GM12878 (cell line): ENCODE measurements at regions of chr7 and their contacts with region 1.

Region 1: DNA sequence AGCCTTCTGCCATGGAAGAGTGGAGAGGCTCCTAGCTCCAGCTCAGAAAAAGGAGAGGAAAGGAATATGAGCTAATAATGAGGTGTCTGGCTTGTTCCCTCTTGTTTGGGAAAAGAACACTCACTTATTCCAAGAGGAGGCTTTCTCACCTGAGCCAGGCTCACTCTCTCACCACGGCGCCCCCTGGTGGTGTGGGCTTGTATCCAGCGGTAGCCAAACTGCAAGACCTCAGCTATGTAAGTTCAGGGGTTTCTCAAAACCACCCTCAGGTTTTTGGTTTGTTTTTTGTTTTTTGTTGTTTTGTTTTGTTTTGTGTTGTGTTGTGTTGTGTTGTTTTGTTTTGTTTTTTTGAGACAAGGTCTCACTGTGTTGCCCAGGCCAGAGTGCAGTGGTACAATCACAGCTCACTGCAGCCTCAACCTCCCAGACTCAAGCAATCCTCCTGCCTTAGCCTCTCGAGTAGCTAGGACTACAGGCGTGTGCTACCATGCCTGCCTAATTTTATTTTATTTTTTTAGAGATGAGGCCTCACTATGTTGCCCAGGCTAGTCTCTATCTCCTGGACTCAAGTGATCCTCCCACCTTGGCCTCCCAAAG is 124.0 kb downstream of the TMEM130 start:
- DNase-seq: no peak
- ATAC-seq: peak; percentile 85
- H3K4me3 ChIP-seq: no peak overlapping the region
- H3K27ac ChIP-seq: no peak overlapping the region
- H3K4me1 ChIP-seq: no peaks in the 10 kb centered on the region
- H3K27me3 ChIP-seq: no peaks in the 10 kb centered on the region
- CTCF ChIP-seq: peak; percentile 75 to 89 (median 88)
- EP300 ChIP-seq: no peak
- POLR2A ChIP-seq: no peak
- RAD21 ChIP-seq: peak; percentile 75

Region 2: GRCh38 chr7:98420966-98421612 is 324.7 kb before region 1 on chr7:
- CTCF ChIA-PET with region 1: interaction called, 23 read pairs
- POLR2A ChIA-PET with region 1: no interaction called
- RAD21 ChIA-PET with region 1: interaction called, 6 read pairs
- SMC1A ChIA-PET with region 1: interaction called, 3 read pairs
- in situ Hi-C with region 1: no loop called
- intact Hi-C with region 1: no loop called
- DNase-seq: no peak
- ATAC-seq: peak; percentile 98
- H3K4me3 ChIP-seq: no peak overlapping the region
- H3K27ac ChIP-seq: no peak overlapping the region
- H3K4me1 ChIP-seq: peaks cover 6% of the 10 kb centered on the region; the same call in 1 of the 2 replicates
- H3K27me3 ChIP-seq: 0 out of 4 replicates have a peak, but pooled peaks cover 0 to 3% of the 10 kb centered on the region in 2 experiments
- CTCF ChIP-seq: peak; percentile 84 to 95 (median 93)
- EP300 ChIP-seq: no peak
- POLR2A ChIP-seq: no peak
- RAD21 ChIP-seq: peak; percentile 59

Region 3: DNA sequence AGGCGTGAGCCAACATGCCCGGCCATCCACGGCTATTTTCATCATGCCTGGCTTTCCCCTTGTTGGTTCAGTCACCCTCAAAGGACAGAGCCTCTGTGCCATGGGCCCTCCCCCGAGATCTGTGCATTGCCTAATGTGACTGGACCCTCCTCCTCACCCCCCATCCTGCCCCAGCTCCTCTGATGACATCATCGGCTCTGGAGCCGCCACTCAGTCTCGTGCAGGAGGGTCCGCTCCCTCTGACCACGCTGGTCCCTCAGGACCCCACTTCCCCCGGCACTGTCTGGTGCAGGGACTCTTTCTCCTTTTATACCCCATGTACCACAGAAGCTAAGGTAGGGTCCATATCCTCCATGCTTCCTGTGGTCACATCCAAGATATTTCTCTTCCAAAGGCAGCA is 311.7 kb before region 1 on chr7:
- CTCF ChIA-PET with region 1: interaction called, 23 read pairs
- POLR2A ChIA-PET with region 1: no interaction called
- RAD21 ChIA-PET with region 1: interaction called, 6 read pairs
- SMC1A ChIA-PET with region 1: interaction called, 5 read pairs
- in situ Hi-C with region 1: loop called (anchors 5 kb)
- intact Hi-C with region 1: loop called (anchors 1 kb)
- DNase-seq: no peak
- ATAC-seq: no peak
- H3K4me3 ChIP-seq: no peak overlapping the region
- H3K27ac ChIP-seq: no peak overlapping the region
- H3K4me1 ChIP-seq: no peaks in the 10 kb centered on the region
- H3K27me3 ChIP-seq: no peaks in the 10 kb centered on the region; a peak in 1 of 4 replicates
- CTCF ChIP-seq: no peak
- EP300 ChIP-seq: no peak
- POLR2A ChIP-seq: no peak
- RAD21 ChIP-seq: no peak

Region 4: GRCh38 chr7:98733036-98733435 is 12.8 kb before region 1 on chr7:
- CTCF ChIA-PET with region 1: interaction called, 23 read pairs
- POLR2A ChIA-PET with region 1: no interaction called
- RAD21 ChIA-PET with region 1: no interaction called
- SMC1A ChIA-PET with region 1: interaction called, 5 read pairs
- in situ Hi-C with region 1: no loop called
- intact Hi-C with region 1: no loop called
- DNase-seq: peak; percentile 20
- ATAC-seq: peak; percentile 93
- H3K4me3 ChIP-seq: no peak overlapping the region
- H3K27ac ChIP-seq: no peak overlapping the region
- H3K4me1 ChIP-seq: no peaks in the 10 kb centered on the region
- H3K27me3 ChIP-seq: no peaks in the 10 kb centered on the region; a peak in 1 of 4 replicates
- CTCF ChIP-seq: peak; percentile 52 to 78 (median 73)
- EP300 ChIP-seq: no peak
- POLR2A ChIP-seq: no peak
- RAD21 ChIP-seq: peak; percentile 49

Region 5: GRCh38 chr7:98764946-98765345 is 19.1 kb after region 1 on chr7:
- CTCF ChIA-PET with region 1: interaction called, 11 read pairs
- POLR2A ChIA-PET with region 1: no interaction called
- RAD21 ChIA-PET with region 1: no interaction called
- SMC1A ChIA-PET with region 1: interaction called, 4 read pairs
- in situ Hi-C with region 1: no loop called
- intact Hi-C with region 1: no loop called
- DNase-seq: no peak
- ATAC-seq: no peak
- H3K4me3 ChIP-seq: no peak overlapping the region
- H3K27ac ChIP-seq: no peak overlapping the region
- H3K4me1 ChIP-seq: no peaks in the 10 kb centered on the region
- H3K27me3 ChIP-seq: no peaks in the 10 kb centered on the region
- CTCF ChIP-seq: no peak
- EP300 ChIP-seq: no peak
- POLR2A ChIP-seq: no peak
- RAD21 ChIP-seq: no peak

Region 6: DNA sequence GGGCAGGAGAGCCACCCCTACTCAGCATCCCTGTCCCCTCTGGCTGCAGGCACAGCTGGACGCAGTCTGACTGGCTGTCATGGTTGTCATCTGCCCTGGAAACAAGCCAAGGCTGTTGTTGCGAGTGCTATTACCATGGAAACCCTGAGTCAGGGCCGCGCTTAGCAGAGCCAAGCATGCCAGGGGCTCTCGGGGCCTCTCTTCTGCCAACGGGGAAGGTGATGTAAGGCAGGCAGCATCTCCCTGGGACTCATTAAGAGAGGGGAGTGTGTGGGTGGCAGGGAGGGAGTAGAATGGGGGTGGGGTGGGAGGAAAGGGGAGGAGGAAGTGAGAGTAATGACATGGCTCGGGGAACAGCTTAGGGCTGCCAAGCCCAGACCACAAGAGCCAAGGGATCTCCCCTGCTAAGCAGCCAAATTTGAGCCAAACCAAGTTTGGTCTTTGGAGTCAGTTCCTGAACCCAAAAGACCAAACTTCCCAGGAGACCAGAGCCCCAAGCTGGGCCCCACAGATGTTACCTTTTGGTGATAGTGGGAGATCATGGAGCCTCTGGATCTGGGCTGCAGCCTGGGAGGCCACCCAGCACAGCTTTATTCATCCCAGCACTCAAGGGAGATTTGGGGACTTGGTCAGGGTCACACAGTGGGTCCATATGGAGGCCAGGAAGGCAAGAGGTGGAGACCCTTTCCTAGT is 56.4 kb after region 1 on chr7:
- CTCF ChIA-PET with region 1: interaction called, 16 read pairs
- POLR2A ChIA-PET with region 1: no interaction called
- RAD21 ChIA-PET with region 1: no interaction called
- SMC1A ChIA-PET with region 1: interaction called, 7 read pairs
- in situ Hi-C with region 1: no loop called
- intact Hi-C with region 1: no loop called
- DNase-seq: peak; percentile 92
- ATAC-seq: peak; percentile 97
- H3K4me3 ChIP-seq: peak overlapping the region; percentile 28; the same call in 1 of the 2 replicates
- H3K27ac ChIP-seq: peak overlapping the region; percentile 92
- H3K4me1 ChIP-seq: peaks cover 19% of the 10 kb centered on the region
- H3K27me3 ChIP-seq: no peaks in the 10 kb centered on the region
- CTCF ChIP-seq: no peak
- EP300 ChIP-seq: peak; percentile 73 to 84
- POLR2A ChIP-seq: no peak
- RAD21 ChIP-seq: 0 out of 2 replicates have a peak, but pooled peaks have one; percentile 19

Region 7: DNA sequence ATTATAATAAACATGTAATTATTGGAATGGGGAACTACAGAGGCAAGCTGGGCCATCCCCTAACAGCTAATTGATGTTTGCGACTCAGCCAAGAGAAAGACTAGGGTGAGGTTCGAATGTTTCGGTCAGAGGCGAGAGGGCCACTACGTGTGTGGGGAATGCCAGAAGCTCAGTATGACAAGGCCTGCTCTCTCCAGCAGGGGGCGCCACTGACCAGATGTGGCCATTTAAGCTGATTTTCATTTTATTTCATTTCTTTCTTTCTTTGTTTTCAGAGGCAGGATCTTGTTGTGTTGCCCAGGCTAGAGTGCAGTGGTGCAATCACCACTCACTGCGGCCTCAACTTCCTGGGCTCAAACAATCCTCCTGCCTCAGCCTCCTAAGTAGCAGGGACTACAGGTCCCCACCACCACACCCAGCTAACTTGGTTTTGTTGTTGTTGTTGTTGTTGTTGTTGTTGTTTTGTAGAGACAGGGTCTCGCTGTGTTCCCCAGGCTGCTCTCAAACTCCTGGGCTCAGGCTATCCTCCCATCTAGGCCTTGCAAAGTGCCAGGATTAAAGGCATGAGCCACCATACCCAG is 85.9 kb after region 1 on chr7:
- CTCF ChIA-PET with region 1: interaction called, 11 read pairs
- POLR2A ChIA-PET with region 1: no interaction called
- RAD21 ChIA-PET with region 1: interaction called, 7 read pairs
- SMC1A ChIA-PET with region 1: interaction called, 6 read pairs
- in situ Hi-C with region 1: no loop called
- intact Hi-C with region 1: no loop called
- DNase-seq: no peak
- ATAC-seq: 0 out of 3 replicates have a peak, but pooled peaks have one; percentile 40
- H3K4me3 ChIP-seq: no peak overlapping the region
- H3K27ac ChIP-seq: no peak overlapping the region
- H3K4me1 ChIP-seq: no peaks in the 10 kb centered on the region
- H3K27me3 ChIP-seq: no peaks in the 10 kb centered on the region
- CTCF ChIP-seq: peak; percentile 23 to 55 (median 49); a peak in 5 of 6 replicates
- EP300 ChIP-seq: no peak
- POLR2A ChIP-seq: no peak
- RAD21 ChIP-seq: no peak